Lower lobe of right lung (tissue), 2 donors: ENCODE measurements at regions of chr4 and their contacts with region 1.

Region 1: GRCh38 chr4:16289897-16290554 is 63.8 kb upstream of the TAPT1 start:
- DNase-seq: no peak
- ATAC-seq: peak in 1 of 2 donors; percentile 48
- H3K4me3 ChIP-seq: no peak overlapping the region
- H3K27ac ChIP-seq: no peak overlapping the region
- H3K4me1 ChIP-seq: no peaks in the 10 kb centered on the region
- H3K27me3 ChIP-seq: no peaks in the 10 kb centered on the region
- CTCF ChIP-seq: peak; percentile 67

Region 2: DNA sequence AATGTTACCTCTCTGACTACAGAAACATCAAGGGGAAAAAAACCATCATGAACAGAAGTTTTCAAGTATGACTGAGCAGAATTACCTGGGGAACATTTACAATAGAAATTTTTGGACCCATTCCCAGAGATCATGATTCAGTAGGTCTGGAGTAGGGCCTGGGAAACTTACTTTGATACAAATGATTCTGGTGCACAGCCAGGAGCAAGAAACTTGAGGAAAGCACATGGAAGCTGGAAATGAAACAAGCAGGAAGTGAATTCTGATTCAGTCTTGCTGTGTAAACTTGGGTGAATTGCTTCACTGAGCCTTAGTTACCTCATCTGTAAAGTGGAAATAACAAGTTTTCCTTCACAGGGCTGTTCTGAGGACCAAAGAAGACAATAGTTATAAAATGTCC is 128.8 kb after region 1 on chr4:
- intact Hi-C with region 1: no loop called
- DNase-seq: no peak
- ATAC-seq: peak; percentile 61 to 79
- H3K4me3 ChIP-seq: no peak overlapping the region
- H3K27ac ChIP-seq: no peak overlapping the region
- H3K4me1 ChIP-seq: no peaks in the 10 kb centered on the region
- H3K27me3 ChIP-seq: no peaks in the 10 kb centered on the region
- CTCF ChIP-seq: no peak

Region 3: DNA sequence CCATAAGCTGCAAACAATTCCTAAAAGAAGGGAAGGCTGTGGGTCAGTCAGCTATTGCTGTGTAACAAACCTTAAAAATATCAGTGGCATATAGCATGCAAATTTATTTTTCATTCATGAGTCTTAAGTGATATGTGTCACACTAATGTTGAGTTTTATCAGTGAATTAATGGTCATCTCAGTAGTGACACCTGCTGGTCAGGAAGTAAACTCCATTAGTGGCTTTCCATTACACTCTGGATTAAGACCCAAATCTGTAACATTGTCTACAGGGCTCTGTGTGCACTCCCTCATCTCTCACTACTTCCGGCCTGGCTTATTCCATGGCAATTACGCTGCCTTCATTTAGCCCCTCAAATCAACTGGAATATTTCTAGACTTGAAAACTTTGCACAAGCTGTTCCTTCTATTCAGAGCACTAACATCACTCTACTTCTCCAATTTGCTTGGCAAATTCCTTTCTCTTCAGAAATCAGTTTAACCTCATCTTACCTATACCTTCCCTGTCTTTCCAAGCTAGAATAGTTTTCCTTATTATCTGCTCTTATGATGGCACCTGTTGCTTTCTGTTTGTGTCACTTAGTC is 153.6 kb after region 1 on chr4:
- intact Hi-C with region 1: loop called (anchors 10 kb)
- DNase-seq: no peak
- ATAC-seq: peak; percentile 54 to 68
- H3K4me3 ChIP-seq: no peak overlapping the region
- H3K27ac ChIP-seq: no peak overlapping the region
- H3K4me1 ChIP-seq: no peaks in the 10 kb centered on the region
- H3K27me3 ChIP-seq: no peaks in the 10 kb centered on the region
- CTCF ChIP-seq: peak; percentile 73